ENCODE measurements at regions of chr11 and their contacts with region 1.

Region 1: GRCh38 chr11:65919146-65920033 is at the start of gene DRAP1:
- DNase-seq: peak; percentile 98 to 100 (median 100)

Region 2: DNA sequence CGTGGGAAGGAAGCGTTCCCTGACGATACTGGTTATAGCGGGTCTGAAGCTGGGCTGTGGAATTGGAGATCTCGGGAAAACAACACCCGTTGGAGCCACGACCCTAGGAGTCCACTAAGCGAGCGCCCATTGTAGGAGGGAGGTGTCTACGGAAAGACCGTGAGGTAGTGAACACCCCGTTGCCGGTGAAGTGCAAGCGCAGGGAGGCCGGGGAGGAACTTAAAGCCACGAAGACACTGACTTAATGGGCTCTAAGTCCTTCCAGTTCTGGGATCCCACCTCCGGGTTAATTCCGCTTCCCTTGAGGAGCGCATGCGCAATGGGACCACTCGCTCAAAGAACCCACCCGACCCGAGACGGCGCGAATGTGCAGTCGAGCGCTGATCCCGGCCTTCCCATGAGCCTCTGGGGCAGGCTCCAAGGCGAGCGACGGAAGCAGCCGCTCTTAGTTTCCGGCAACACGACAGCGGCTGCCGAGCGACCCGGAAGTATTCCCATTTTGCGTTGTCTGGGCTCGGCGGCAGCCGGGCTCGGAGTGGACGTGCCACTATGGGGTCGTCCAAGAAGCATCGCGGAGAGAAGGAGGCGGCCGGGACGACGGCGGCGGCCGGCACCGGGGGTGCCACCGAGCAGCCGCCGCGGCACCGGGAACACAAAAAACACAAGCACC is 42.0 kb after region 1 on chr11 and contains the start of gene SART1:
- intact Hi-C with region 1: loop called (anchors 2 kb)
- DNase-seq: peak; percentile 96 to 99 (median 97)

Measured in posterior cingulate gyrus (tissue), 11 donors.